ENCODE measurements at regions of chr22 and their contacts with region 1.

Region 1: GRCh38 chr22:40651563-40652501 is 15.3 kb upstream of the MRTFA start:
- DNase-seq: peak; percentile 99
- H3K4me3 Mint-ChIP-seq: peak overlapping the region; percentile 83
- H3K27ac Mint-ChIP-seq: peak overlapping the region; percentile 98
- H3K4me1 Mint-ChIP-seq: peaks cover 32% of the 10 kb centered on the region
- H3K27me3 Mint-ChIP-seq: no peaks in the 10 kb centered on the region
- CTCF ChIP-seq: no peak

Region 2: DNA sequence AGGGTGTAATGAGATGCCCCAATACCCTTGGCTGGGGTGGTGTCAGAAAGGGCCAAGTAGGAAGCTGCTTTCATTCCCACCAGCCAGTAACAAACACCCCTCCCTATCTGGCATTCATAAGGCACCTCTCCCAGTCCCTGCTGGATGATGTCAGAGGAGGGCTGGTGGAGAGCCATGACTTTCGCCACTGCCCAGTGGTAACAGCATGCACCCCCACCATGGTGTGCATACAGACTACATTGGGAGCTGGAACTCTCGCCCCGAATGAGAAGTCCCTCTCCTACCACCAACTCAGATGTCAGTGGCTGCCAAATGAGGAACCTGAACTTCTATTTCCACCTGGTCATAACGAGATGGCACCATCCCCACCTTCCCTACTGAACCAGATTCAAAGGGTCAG is 208.1 kb before region 1 on chr22:
- CTCF ChIA-PET with region 1: interaction called, 220 read pairs
- POLR2A ChIA-PET with region 1: interaction called, 44 read pairs
- intact Hi-C with region 1: no loop called
- DNase-seq: no peak
- H3K4me3 Mint-ChIP-seq: no peak overlapping the region
- H3K27ac Mint-ChIP-seq: peak overlapping the region; percentile 23
- H3K4me1 Mint-ChIP-seq: peaks cover 21% of the 10 kb centered on the region
- H3K27me3 Mint-ChIP-seq: no peaks in the 10 kb centered on the region
- CTCF ChIP-seq: no peak

Region 3: DNA sequence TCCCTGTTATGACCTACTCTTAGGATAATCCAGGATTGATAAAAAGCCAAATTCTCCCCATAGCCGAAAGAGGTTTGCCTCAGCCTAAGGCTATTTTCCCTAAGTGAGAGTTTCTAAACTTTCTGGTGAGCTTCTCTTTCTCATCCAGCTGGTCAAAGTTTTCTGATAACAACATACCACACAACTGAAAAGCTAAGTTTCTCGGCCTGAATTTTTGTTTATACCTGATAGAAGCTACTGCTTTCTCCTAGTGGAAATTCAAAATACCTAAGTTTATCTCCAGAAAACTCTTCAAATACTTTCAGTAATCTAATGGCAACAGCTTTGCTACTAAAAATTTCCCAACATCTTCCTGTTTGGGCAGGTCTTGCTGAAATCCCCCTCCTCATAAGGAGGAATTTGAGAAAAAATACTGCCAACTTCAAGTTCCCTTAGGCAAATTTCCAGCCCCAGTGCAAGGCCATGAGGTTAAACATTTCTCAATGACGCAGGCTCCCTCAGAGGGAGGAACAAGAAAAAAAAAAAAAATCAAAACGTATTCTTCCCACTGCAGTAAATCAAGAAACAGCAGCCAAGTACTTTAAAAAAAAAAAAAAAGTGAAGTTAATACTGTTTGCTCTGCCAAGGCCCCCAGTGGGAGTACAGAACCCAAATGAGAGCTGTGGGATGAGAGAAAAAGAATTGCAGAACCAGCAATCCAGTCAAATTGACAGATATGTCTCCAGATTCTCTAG is 142.3 kb before region 1 on chr22:
- CTCF ChIA-PET with region 1: interaction called, 8 read pairs
- POLR2A ChIA-PET with region 1: interaction called, 19 read pairs
- intact Hi-C with region 1: no loop called
- DNase-seq: peak; percentile 97
- H3K4me3 Mint-ChIP-seq: peak overlapping the region; percentile 31
- H3K27ac Mint-ChIP-seq: peak overlapping the region; percentile 85
- H3K4me1 Mint-ChIP-seq: peaks cover 44% of the 10 kb centered on the region
- H3K27me3 Mint-ChIP-seq: no peaks in the 10 kb centered on the region
- CTCF ChIP-seq: no peak

Region 4: DNA sequence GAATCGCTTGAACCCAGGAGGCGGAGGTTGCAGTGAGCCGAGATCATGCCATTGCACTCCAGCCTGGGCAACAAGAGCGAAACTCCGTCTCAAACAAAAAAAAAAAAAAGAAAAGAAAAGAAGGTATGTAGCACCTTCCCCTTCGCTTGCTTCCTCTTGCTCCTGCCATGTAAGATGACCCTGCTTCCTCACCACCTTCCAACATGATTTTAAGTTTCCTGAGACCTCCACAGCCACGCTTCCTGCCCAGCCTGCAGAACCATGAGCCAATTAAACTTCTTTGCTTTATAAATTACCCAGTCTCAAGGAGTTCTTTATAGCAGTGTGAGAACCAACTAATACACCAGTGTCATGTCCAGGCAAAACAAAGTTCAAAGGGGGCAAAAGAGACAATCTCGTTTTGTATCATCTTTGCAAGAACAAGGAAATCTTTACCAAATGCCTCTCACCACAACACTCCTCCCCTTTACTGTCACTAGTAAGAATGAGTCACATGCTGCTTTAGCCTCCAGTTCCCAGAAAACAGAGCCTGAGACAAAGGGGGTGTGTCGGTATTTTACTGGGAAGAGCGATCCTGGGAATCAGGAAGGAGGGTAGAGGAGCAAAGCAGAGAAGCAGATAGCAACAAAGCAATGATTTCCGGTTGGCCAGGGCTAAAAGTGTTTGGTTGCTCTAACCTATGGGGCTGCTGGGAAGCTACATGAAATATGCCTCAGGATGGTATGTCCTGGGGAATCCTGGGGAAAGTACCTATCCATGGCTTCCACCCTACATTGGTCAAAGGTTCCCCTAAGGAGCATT is 17.0 kb after region 1 on chr22:
- CTCF ChIA-PET with region 1: interaction called, 3 read pairs
- POLR2A ChIA-PET with region 1: interaction called, 11 read pairs
- intact Hi-C with region 1: no loop called
- DNase-seq: peak; percentile 88
- H3K4me3 Mint-ChIP-seq: no peak overlapping the region
- H3K27ac Mint-ChIP-seq: peak overlapping the region; percentile 61
- H3K4me1 Mint-ChIP-seq: peaks cover 20% of the 10 kb centered on the region
- H3K27me3 Mint-ChIP-seq: no peaks in the 10 kb centered on the region
- CTCF ChIP-seq: no peak

Region 5: DNA sequence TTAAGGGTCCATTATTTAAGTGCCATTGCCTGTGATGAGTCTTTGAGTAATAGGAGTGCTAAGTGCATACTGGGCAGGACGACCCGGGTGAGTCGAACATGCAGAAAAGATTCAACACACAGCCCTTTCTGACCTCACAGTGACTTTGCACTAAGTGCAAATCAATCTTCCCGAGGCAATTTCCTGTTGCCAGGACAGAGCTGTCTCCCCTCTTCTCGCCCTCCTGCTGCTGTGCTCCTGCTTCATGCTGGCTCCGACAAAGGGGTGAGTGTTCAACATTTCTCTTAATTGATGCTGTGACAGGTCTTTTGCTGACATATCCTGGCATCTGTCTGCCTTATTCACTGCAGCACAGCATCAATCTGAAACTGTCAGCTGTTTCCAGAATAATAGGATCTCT is 69.4 kb after region 1 on chr22:
- CTCF ChIA-PET with region 1: no interaction called
- POLR2A ChIA-PET with region 1: no interaction called
- intact Hi-C with region 1: no loop called
- DNase-seq: no peak
- H3K4me3 Mint-ChIP-seq: no peak overlapping the region
- H3K27ac Mint-ChIP-seq: no peak overlapping the region
- H3K4me1 Mint-ChIP-seq: no peaks in the 10 kb centered on the region
- H3K27me3 Mint-ChIP-seq: no peaks in the 10 kb centered on the region
- CTCF ChIP-seq: no peak

Region 6: GRCh38 chr22:40764763-40765441 is 113.1 kb after region 1 on chr22:
- CTCF ChIA-PET with region 1: interaction called, 49 read pairs
- POLR2A ChIA-PET with region 1: interaction called, 46 read pairs
- intact Hi-C with region 1: loop called (anchors 1 kb)
- DNase-seq: no peak
- H3K4me3 Mint-ChIP-seq: no peak overlapping the region
- H3K27ac Mint-ChIP-seq: no peak overlapping the region
- H3K4me1 Mint-ChIP-seq: no peaks in the 10 kb centered on the region
- H3K27me3 Mint-ChIP-seq: no peaks in the 10 kb centered on the region
- CTCF ChIP-seq: no peak

Measured in MCF 10A (cell line).